ENCODE measurements at regions of chr11 and their contacts with region 1.

Region 1: GRCh38 chr11:76734456-76735420 is 48.4 kb upstream of the TSKU start:
- H3K4me3 ChIP-seq: no peak overlapping the region
- H3K27ac ChIP-seq: no peak overlapping the region
- H3K4me1 ChIP-seq: no peaks in the 10 kb centered on the region
- CTCF ChIP-seq: no peak

Region 2: DNA sequence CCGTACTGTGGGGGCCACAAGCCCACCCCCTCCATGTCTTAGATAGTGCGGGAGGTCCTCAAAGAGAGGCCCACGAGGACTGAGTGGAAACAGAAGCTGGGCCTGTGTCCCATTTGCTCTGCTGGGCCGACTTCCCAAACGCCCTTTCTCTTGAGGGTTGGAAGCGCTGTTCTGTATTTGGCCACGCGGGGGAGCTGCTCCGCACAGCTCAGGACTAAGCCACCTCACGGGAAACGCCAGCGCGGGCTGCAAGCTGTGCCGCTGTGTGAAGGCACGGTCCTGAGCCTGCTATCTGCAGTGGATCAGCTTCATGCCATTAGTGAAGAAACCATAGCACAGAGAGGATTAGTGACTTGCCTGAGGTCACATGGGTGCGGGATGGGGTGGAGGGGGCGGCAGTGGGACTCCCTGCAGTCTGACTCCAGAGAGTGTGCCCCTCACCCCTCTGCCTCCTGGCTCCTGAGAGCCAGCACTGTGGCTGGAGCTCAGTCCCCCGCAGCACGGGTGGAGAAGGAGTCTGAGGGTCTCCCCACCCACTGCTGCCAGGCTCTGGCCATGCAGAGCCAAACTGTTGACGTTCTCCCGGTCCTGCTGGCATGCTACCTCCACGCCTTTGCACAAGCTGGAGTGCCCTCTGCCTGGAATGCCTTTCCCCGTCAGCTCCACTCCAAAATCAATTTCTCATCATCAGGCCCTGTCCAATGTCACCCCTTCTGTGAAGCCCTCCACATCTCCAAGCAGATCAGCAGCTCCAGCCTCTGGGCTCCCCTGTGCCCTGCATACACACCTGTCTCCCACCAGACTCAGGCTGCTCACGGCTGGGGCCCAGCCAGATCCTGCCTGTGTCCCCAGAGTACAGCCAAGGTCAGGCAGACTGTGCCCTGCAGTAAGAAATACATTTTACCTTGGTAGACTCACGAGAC is 12.7 kb before region 1 on chr11:
- CTCF ChIA-PET with region 1: interaction called, 46 read pairs
- POLR2A ChIA-PET with region 1: no interaction called
- H3K4me3 ChIP-seq: no peak overlapping the region
- H3K27ac ChIP-seq: no peak overlapping the region
- H3K4me1 ChIP-seq: no peaks in the 10 kb centered on the region
- CTCF ChIP-seq: peak; percentile 69

Region 3: DNA sequence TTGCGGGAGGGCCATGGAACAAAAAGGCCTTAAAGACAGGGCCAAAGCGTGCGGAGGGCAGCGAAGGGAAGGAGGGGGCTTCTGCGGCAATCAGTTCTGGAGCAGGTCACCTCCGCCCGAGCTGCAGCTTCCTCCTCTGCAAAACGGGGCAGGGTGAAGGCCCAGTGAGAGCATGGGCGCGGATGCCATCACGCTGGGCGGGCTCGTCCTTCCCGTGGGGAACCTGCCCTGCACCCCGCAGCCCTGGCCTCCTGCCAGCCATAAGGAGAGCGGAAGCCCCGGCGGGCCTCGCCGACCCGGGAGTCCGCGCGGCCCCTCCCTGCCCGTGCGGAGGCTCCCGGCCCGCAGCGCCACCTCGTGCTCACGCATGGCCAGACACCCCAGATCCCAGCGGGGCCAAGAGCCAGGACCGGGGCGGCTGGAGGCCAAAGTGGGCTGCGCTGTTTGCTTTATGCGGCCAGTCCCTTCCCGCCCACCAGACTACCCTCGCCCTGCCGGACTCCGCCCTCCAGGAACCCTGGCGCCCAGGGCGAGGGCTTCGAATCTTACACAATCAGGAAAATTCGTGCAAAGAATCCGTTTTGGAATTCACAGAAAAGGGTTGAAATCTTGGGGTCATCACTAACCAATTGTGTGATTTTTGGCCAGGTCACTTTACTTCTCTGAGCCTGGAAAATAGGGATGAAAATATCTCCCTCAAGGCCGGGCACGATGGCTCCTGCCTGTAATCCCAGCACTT is 64.5 kb after region 1 on chr11:
- CTCF ChIA-PET with region 1: interaction called, 99 read pairs
- POLR2A ChIA-PET with region 1: no interaction called
- H3K4me3 ChIP-seq: peak overlapping the region; percentile 5; the same call in 1 of the 2 replicates
- H3K27ac ChIP-seq: no peak overlapping the region
- H3K4me1 ChIP-seq: 0 out of 2 replicates have a peak, but pooled peaks cover 2% of the 10 kb centered on the region
- CTCF ChIP-seq: peak; percentile 73

Region 4: DNA sequence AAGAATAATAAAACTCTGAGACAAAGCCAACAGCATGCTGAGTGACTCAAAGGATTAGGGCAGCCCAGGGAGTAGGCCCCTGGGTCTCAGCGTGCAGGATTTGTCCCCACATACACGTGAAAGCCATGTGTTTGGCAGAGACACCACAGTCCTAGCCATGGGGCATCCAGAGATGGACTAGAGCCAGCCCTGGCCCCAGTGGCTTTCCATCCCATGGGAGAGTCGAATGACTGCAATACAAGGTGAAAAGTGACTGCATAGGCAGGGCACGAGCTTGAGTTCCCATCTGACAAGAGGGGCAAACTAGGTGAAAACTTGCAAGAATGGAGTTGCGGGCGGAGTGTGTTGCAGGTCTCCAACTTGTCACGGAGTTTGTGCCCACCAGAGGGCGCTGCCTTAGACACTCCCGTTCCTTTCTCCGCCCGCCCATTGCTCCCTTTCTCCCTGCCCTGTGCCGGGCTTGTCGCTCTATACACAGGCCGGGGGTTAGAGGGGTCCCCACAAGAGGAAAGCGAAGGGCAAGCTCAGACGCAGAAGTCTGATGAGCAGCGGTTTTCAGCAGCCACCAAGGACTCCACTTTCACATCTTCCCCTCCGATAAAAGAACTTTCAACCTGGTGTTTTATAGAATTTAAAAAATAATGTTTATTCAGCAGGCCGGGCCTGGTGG is 72.6 kb after region 1 on chr11:
- CTCF ChIA-PET with region 1: interaction called, 99 read pairs
- POLR2A ChIA-PET with region 1: no interaction called
- H3K4me3 ChIP-seq: no peak overlapping the region
- H3K27ac ChIP-seq: no peak overlapping the region
- H3K4me1 ChIP-seq: no peaks in the 10 kb centered on the region
- CTCF ChIP-seq: peak; percentile 74

Region 5: GRCh38 chr11:77047007-77047927 is 312.5 kb after region 1 on chr11:
- CTCF ChIA-PET with region 1: interaction called, 20 read pairs
- POLR2A ChIA-PET with region 1: no interaction called
- H3K4me3 ChIP-seq: peak overlapping the region; percentile 36
- H3K27ac ChIP-seq: no peak overlapping the region
- H3K4me1 ChIP-seq: no peaks in the 10 kb centered on the region
- CTCF ChIP-seq: peak; percentile 54

Region 6: GRCh38 chr11:77287615-77288273 is 553.0 kb after region 1 on chr11:
- CTCF ChIA-PET with region 1: no interaction called
- POLR2A ChIA-PET with region 1: no interaction called
- H3K4me3 ChIP-seq: no peak overlapping the region
- H3K27ac ChIP-seq: no peak overlapping the region
- H3K4me1 ChIP-seq: no peaks in the 10 kb centered on the region
- CTCF ChIP-seq: no peak